ENCODE measurements at regions of chr16 and their contacts with region 1.

Region 1: GRCh38 chr16:57591086-57591869 is 37.2 kb upstream of the ADGRG1 start:
- DNase-seq: peak; percentile 40 to 81 (median 52)
- ATAC-seq: peak; percentile 45
- H3K4me3 ChIP-seq: no peak overlapping the region
- H3K4me3 Mint-ChIP-seq: peak overlapping the region; percentile 57
- H3K27ac ChIP-seq: no peak overlapping the region
- H3K27ac Mint-ChIP-seq: peak overlapping the region; percentile 70
- H3K4me1 ChIP-seq: peaks cover 32% of the 10 kb centered on the region
- H3K4me1 Mint-ChIP-seq: peaks cover 42% of the 10 kb centered on the region
- H3K27me3 ChIP-seq: no peaks in the 10 kb centered on the region
- H3K27me3 Mint-ChIP-seq: no peaks in the 10 kb centered on the region
- CTCF ChIP-seq: peak; percentile 83

Region 2: GRCh38 chr16:57648590-57649442 is 57.5 kb after region 1 on chr16:
- CTCF ChIA-PET with region 1: interaction called, 5 read pairs
- POLR2A ChIA-PET with region 1: interaction called, 4 read pairs
- intact Hi-C with region 1: loop called (anchors 1 kb)
- DNase-seq: peak; percentile 68 to 89 (median 82)
- ATAC-seq: peak; percentile 92
- H3K4me3 ChIP-seq: no peak overlapping the region
- H3K4me3 Mint-ChIP-seq: no peak overlapping the region
- H3K27ac ChIP-seq: no peak overlapping the region
- H3K27ac Mint-ChIP-seq: no peak overlapping the region
- H3K4me1 ChIP-seq: peaks cover 50% of the 10 kb centered on the region
- H3K4me1 Mint-ChIP-seq: peaks cover 27% of the 10 kb centered on the region
- H3K27me3 ChIP-seq: no peaks in the 10 kb centered on the region
- H3K27me3 Mint-ChIP-seq: no peaks in the 10 kb centered on the region
- CTCF ChIP-seq: peak; percentile 100

Region 3: DNA sequence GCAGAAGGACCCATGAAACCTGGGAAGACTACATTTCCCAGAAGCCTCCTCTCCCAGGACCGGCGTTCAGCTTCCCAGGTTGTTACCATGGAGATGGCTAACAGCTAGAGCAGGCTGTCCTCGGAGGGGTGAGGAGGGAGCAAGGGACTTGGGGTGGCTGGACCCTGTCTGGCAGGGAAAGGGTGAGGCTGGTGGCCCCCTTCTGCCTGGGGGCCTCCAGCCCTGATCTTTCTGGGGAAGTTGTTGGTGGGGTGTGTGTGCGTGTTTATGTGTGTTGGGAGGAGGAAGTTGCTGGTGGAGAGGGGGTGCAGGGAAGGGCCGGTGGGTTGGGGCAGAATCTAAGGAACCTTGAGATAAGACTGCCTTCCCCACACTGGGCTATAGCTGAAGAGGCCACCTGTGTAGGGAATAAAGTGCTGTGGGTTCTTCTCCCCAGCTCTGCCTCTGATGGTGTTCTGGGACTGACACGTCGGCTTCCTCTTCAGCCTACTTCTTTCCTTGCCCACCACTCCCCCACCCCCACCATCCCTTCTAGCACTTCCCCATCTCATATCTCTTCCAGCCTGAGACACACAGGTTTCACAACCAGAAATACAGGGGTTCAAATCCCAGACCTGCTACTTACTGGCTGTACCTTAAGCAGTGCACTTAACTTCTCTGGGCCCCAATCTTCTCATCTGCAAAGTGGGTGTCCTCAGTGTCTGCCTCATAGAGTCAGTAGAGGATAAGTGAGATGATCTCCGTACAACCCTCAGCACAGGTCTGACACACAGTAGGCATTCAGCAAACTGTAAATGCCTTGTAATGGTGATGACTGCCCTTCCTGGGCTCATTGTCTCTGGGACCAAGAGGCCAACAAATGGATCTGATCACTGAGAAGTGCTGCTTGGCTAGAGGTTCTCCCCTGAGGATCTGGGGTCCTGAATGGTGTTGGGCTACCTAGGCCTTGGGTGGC is 103.7 kb after region 1 on chr16 and contains the start of gene DRC7:
- CTCF ChIA-PET with region 1: no interaction called
- POLR2A ChIA-PET with region 1: no interaction called
- intact Hi-C with region 1: no loop called
- DNase-seq: peak in 4 of 14 experiments; percentile 23 to 63 (median 46)
- ATAC-seq: no peak
- H3K4me3 ChIP-seq: no peak within 1 kb of the TSS
- H3K4me3 Mint-ChIP-seq: no peak within 1 kb of the TSS
- H3K27ac ChIP-seq: no peak within 1 kb of the TSS
- H3K27ac Mint-ChIP-seq: no peak within 1 kb of the TSS
- H3K4me1 ChIP-seq: peaks cover 12% of the 10 kb centered on the region
- H3K4me1 Mint-ChIP-seq: peaks cover 8% of the 10 kb centered on the region
- H3K27me3 ChIP-seq: no peaks in the 10 kb centered on the region
- H3K27me3 Mint-ChIP-seq: no peaks in the 10 kb centered on the region
- CTCF ChIP-seq: no peak
- total RNA-seq, gene DRC7: not detected